T-cell (primary cell): ENCODE measurements at regions of chr5 and their contacts with region 1.

Region 1: DNA sequence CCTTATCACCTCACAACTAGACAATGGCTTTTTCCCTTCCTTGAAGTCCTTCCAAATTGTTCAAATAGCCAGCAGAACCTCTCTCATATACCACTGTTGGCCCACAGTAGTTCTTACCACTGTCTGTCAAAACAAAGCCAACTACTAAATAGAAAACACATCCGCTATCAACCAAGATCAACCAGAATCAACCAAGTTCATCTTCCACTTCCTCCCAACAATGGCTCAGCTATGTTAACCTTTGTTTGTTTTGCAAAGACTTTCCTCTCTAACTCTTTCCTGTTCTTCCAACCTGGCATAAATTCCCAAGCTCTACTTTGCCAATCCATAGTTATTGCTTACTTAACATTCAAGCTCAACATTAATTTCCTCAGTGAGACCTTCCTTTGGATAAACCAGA is 15.2 kb downstream of the ELL2 start:
- DNase-seq: no peak
- ATAC-seq: no peak
- H3K4me3 ChIP-seq: no peak overlapping the region
- H3K4me3 Mint-ChIP-seq: no peak overlapping the region
- H3K27ac ChIP-seq: no peak overlapping the region
- H3K27ac Mint-ChIP-seq: no peak overlapping the region
- H3K4me1 ChIP-seq: no peaks in the 10 kb centered on the region
- H3K4me1 Mint-ChIP-seq: peaks cover 10 to 21% (median 20%) of the 10 kb centered on the region in 3 donors
- H3K27me3 ChIP-seq: no peaks in the 10 kb centered on the region
- H3K27me3 Mint-ChIP-seq: no peaks in the 10 kb centered on the region

Region 2: GRCh38 chr5:95369771-95370170 is 576.7 kb before region 1 on chr5:
- CTCF ChIA-PET with region 1: no interaction called
- POLR2A ChIA-PET with region 1: no interaction called
- DNase-seq: no peak
- ATAC-seq: no peak
- H3K4me3 ChIP-seq: no peak overlapping the region
- H3K4me3 Mint-ChIP-seq: no peak overlapping the region
- H3K27ac ChIP-seq: no peak overlapping the region
- H3K27ac Mint-ChIP-seq: no peak overlapping the region
- H3K4me1 ChIP-seq: no peaks in the 10 kb centered on the region
- H3K4me1 Mint-ChIP-seq: no peaks in the 10 kb centered on the region
- H3K27me3 ChIP-seq: peaks cover 0 to 10% of the 10 kb centered on the region in 2 experiments
- H3K27me3 Mint-ChIP-seq: peaks cover 17 to 18% of the 10 kb centered on the region in 2 donors

Region 3: GRCh38 chr5:95959051-95959887 is 12.8 kb after region 1 on chr5:
- CTCF ChIA-PET with region 1: interaction called in 1 of 2 experiments, 3 read pairs
- POLR2A ChIA-PET with region 1: interaction called, 6 to 10 read pairs
- DNase-seq: no peak
- ATAC-seq: no peak
- H3K4me3 ChIP-seq: no peak overlapping the region
- H3K4me3 Mint-ChIP-seq: peak overlapping the region; percentile 93 to 94 (median 93)
- H3K27ac ChIP-seq: no peak overlapping the region
- H3K27ac Mint-ChIP-seq: no peak overlapping the region
- H3K4me1 ChIP-seq: peaks cover 0 to 32% of the 10 kb centered on the region in 2 experiments
- H3K4me1 Mint-ChIP-seq: peaks cover 40 to 54% (median 49%) of the 10 kb centered on the region in 3 donors
- H3K27me3 ChIP-seq: peaks cover 0 to 9% of the 10 kb centered on the region in 2 experiments
- H3K27me3 Mint-ChIP-seq: no peaks in the 10 kb centered on the region